Mammary epithelial cell (primary cell): ENCODE measurements at regions of chr18 and their contacts with region 1.

Region 1: GRCh38 chr18:42141439-42141838 is 186.4 kb downstream of the PIK3C3 start:
- DNase-seq: no peak
- H3K4me3 ChIP-seq: no peak overlapping the region
- H3K27ac ChIP-seq: no peak overlapping the region
- H3K4me1 ChIP-seq: no peaks in the 10 kb centered on the region
- H3K27me3 ChIP-seq: no peaks in the 10 kb centered on the region
- CTCF ChIP-seq: no peak

Region 2: GRCh38 chr18:41630232-41630886 is 511.1 kb before region 1 on chr18:
- CTCF ChIA-PET with region 1: no interaction called
- dilution Hi-C with region 1: no loop called
- in situ Hi-C with region 1: no loop called
- intact Hi-C with region 1: no loop called
- DNase-seq: no peak
- H3K4me3 ChIP-seq: no peak overlapping the region
- H3K27ac ChIP-seq: no peak overlapping the region
- H3K4me1 ChIP-seq: peaks cover 4% of the 10 kb centered on the region
- H3K27me3 ChIP-seq: no peaks in the 10 kb centered on the region
- CTCF ChIP-seq: no peak

Region 3: GRCh38 chr18:42028247-42028832 is 113.1 kb before region 1 on chr18:
- CTCF ChIA-PET with region 1: no interaction called
- dilution Hi-C with region 1: no loop called
- in situ Hi-C with region 1: loop called in 1 of 2 experiments (anchors 25 kb)
- intact Hi-C with region 1: no loop called
- DNase-seq: no peak
- H3K4me3 ChIP-seq: no peak overlapping the region
- H3K27ac ChIP-seq: no peak overlapping the region
- H3K4me1 ChIP-seq: no peaks in the 10 kb centered on the region
- H3K27me3 ChIP-seq: no peaks in the 10 kb centered on the region
- CTCF ChIP-seq: peak; percentile 79 to 89

Region 4: GRCh38 chr18:42211201-42211600 is 69.8 kb after region 1 on chr18:
- CTCF ChIA-PET with region 1: no interaction called
- dilution Hi-C with region 1: no loop called
- in situ Hi-C with region 1: no loop called
- intact Hi-C with region 1: no loop called
- DNase-seq: no peak
- H3K4me3 ChIP-seq: no peak overlapping the region
- H3K27ac ChIP-seq: no peak overlapping the region
- H3K4me1 ChIP-seq: no peaks in the 10 kb centered on the region
- H3K27me3 ChIP-seq: no peaks in the 10 kb centered on the region
- CTCF ChIP-seq: no peak

Region 5: DNA sequence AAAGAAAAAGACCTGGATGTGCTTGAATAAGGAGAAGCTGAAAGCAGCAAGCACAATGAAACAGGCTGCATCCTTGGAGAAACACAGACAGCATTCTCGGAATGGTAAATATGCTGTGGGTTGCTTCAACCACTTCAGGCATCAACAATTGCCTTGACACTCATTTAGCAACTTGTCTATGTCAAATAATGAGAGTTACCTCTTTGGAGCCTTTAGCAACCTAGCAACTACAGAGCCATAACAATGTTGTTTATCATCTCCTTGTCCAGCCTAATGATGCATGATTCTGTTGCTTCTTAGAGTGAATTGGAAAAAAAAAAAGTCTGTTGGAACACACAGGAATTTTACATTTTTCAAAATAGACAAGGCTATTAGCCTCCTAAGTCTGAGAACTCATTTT is 224.2 kb after region 1 on chr18:
- CTCF ChIA-PET with region 1: no interaction called
- dilution Hi-C with region 1: no loop called
- in situ Hi-C with region 1: no loop called
- intact Hi-C with region 1: no loop called
- DNase-seq: no peak
- H3K4me3 ChIP-seq: no peak overlapping the region
- H3K27ac ChIP-seq: no peak overlapping the region
- H3K4me1 ChIP-seq: no peaks in the 10 kb centered on the region
- H3K27me3 ChIP-seq: peaks cover 2% of the 10 kb centered on the region
- CTCF ChIP-seq: no peak

Region 6: DNA sequence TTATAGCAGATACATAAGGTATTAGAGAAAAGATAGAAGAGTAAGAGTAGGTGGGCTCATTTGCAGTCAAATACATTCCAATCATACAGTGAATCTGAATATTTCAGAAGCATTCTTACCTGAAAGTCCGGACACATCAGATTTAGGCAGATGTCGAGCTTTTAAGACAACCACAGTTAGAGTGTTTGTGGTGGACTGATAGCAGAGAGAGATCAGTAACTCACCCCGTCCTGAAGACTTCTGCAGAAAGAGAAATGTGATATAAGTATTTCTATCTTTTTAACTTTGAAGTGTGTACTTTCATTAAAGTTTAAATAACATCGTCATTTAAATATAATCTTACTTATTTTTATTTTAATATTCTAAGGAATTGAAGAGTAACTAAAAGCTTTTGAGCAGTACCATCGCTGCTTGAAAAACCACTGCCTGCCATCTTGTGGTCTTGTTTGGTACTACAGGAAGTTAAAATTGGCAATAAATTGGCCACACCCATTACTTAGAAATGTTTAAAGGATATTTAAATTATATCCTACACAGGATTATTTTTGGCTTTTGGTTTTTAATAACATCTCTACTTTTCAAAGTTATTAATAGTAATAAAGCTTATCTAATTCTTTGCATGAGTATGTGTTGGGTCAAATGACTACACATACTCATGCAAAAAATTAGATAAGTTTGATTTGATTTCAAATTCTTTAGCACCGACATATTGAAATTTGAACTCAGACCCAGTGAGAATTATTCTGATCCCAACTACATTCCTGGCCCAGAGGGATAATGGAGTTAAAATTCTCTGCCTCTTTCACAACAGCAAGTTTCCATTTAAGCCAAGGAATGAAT is 1130.4 kb after region 1 on chr18:
- CTCF ChIA-PET with region 1: no interaction called
- dilution Hi-C with region 1: no loop called
- in situ Hi-C with region 1: loop called in 1 of 2 experiments (anchors 25 kb)
- intact Hi-C with region 1: no loop called
- DNase-seq: peak; percentile 26
- H3K4me3 ChIP-seq: no peak overlapping the region
- H3K27ac ChIP-seq: no peak overlapping the region
- H3K4me1 ChIP-seq: no peaks in the 10 kb centered on the region
- H3K27me3 ChIP-seq: no peaks in the 10 kb centered on the region
- CTCF ChIP-seq: peak; percentile 74 to 78